BJ (cell line): ENCODE measurements at regions of chr11 and their contacts with region 1.

Region 1: DNA sequence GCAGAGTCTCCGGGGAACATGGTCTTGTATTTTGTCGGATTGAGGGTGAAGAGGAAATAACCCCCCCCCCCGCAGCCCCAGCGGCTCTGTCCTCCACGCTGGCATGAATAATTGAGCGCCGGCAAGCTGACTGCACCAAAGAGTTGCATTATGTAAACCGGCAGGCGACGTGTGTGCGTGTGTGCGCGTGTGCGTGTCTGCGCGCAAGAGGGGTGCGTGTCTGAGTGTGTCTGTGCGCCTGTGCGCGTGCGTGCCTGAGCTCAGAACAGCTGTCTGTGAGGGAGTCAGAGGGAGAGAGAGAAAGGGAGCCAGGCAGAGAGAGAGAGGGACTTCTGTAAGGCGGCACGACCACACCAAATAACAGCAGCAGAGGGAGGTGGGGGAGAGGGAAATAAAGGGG is 94.4 kb downstream of the SCN3B start:
- DNase-seq: peak; percentile 51
- H3K4me3 ChIP-seq: peak overlapping the region; percentile 20
- H3K27me3 ChIP-seq: no peaks in the 10 kb centered on the region
- CTCF ChIP-seq: no peak

Region 2: GRCh38 chr11:123306531-123306930 is 253.5 kb before region 1 on chr11:
- CTCF ChIA-PET with region 1: no interaction called
- POLR2A ChIA-PET with region 1: no interaction called
- DNase-seq: no peak
- H3K4me3 ChIP-seq: no peak overlapping the region
- H3K27me3 ChIP-seq: peaks cover 4% of the 10 kb centered on the region; the same call in 1 of the 2 replicates
- CTCF ChIP-seq: no peak

Region 3: GRCh38 chr11:123472236-123472935 is 87.6 kb before region 1 on chr11:
- CTCF ChIA-PET with region 1: no interaction called
- POLR2A ChIA-PET with region 1: no interaction called
- DNase-seq: no peak
- H3K4me3 ChIP-seq: no peak overlapping the region
- H3K27me3 ChIP-seq: no peaks in the 10 kb centered on the region
- CTCF ChIP-seq: no peak

Region 4: DNA sequence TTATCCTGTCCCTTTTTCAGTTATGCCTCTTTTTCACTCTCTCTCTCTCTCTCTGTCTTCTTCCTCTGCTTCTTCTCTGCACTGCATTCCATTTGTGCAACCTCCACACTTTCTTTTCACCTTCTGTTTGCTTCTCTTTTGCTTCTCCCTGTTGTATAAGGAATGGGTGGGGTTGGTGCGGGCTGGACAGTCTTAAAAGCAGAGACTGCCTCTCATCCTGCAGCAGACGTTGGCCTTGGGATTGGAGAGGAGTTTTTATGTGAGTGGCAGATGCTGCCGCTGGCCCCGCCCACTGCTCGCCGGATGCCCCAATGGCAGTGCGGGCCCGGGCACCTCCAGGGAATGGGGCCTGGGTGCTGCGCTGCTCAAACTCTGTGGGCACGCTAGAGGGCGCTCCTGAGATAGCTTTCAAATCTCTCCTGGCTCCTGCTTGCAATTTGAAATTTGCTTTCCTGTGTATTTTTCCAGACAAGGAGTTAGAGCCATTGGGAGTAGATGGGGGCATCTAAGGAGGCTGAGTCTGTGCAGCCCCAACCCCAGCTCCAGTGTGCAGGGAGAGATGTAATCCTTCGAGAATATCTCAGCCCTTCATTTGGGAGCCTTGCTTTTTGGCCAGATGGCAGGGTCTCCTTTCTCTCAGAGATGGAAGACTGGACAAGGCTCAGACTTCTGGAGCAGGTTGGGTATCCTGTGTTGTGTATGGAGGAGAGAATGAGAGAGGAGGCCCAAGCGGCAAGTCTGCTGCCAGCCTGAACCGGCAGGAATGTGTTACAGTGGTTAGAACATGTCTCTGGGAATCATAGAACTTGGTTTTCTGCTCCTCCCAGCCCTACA is 48.8 kb before region 1 on chr11:
- CTCF ChIA-PET with region 1: interaction called, 32 read pairs
- POLR2A ChIA-PET with region 1: no interaction called
- DNase-seq: peak; percentile 67
- H3K4me3 ChIP-seq: no peak overlapping the region
- H3K27me3 ChIP-seq: no peaks in the 10 kb centered on the region
- CTCF ChIP-seq: peak; percentile 95

Region 5: DNA sequence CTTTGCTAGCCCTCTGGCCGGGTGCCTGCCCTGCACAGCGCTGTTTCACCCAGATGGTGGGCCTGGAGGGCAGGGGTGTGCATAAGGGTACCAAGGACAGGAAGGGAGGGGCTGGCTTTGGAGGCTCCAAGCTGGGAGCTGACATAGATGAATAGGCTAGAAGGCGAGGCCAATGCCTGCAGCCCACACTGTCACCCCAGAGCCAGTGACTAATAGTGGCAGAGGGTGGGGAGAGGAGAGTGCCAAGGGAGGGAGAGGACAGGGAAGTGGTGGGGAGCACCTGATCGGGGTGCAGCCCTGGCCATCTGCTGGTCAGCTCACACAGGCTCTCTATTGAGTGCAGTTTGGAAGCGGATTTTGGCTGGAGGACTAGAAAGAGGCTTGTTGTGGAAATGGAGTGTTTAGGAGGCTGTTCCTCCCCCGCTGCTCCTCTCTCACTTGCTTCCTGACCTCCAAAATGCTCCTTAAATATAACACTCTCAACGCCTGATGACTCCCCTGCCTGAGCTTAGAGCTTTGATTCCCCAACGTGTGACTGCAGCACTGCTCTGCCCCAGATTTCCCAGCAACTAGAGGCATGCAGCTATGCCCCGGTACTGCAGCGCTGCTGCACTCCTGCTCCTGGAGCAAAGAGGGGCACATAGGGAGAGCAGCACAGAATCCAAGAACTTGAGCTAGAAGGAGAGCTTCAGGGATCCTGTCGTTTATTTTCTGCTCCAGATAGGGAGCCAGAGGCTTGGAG is 40.8 kb before region 1 on chr11:
- CTCF ChIA-PET with region 1: interaction called, 14 read pairs
- POLR2A ChIA-PET with region 1: interaction called, 21 read pairs
- DNase-seq: no peak
- H3K4me3 ChIP-seq: no peak overlapping the region
- H3K27me3 ChIP-seq: no peaks in the 10 kb centered on the region
- CTCF ChIP-seq: no peak

Region 6: GRCh38 chr11:123547180-123547579 is 12.8 kb before region 1 on chr11:
- CTCF ChIA-PET with region 1: interaction called, 36 read pairs
- POLR2A ChIA-PET with region 1: interaction called, 6 read pairs
- DNase-seq: no peak
- H3K4me3 ChIP-seq: no peak overlapping the region
- H3K27me3 ChIP-seq: no peaks in the 10 kb centered on the region
- CTCF ChIP-seq: no peak

Region 7: DNA sequence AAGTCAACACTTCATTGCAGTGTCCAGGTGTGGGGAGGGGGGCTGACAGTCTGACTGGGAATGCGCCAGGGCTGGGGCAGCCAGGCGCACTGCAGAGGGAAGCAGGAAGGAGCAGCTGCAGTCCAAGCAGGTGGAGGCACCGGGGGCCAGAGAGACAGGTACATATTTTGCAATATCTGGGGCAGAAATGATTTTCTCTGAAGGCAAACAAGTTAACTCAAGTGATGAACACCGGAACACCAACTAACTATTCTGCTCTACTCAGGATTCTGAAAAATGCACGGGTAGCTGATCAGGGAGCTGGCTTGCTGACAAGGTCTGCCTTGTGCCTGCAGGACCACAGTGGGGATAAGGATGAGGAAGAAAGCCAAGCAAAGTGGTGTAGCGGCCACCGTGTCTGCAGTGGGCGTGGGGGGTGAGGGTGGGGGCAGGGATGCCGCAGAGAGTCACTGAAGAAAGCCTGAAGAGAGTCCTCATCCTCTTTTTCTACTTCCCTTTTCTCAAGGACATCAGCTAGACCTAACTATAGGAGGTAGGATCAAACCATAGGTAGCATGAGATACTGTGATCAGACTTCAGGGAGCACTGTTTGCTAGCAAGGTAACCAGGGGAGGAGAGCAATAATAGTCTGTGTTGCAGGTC is 11.1 kb after region 1 on chr11:
- CTCF ChIA-PET with region 1: interaction called, 42 read pairs
- POLR2A ChIA-PET with region 1: no interaction called
- DNase-seq: no peak
- H3K4me3 ChIP-seq: no peak overlapping the region
- H3K27me3 ChIP-seq: no peaks in the 10 kb centered on the region
- CTCF ChIP-seq: no peak

Region 8: DNA sequence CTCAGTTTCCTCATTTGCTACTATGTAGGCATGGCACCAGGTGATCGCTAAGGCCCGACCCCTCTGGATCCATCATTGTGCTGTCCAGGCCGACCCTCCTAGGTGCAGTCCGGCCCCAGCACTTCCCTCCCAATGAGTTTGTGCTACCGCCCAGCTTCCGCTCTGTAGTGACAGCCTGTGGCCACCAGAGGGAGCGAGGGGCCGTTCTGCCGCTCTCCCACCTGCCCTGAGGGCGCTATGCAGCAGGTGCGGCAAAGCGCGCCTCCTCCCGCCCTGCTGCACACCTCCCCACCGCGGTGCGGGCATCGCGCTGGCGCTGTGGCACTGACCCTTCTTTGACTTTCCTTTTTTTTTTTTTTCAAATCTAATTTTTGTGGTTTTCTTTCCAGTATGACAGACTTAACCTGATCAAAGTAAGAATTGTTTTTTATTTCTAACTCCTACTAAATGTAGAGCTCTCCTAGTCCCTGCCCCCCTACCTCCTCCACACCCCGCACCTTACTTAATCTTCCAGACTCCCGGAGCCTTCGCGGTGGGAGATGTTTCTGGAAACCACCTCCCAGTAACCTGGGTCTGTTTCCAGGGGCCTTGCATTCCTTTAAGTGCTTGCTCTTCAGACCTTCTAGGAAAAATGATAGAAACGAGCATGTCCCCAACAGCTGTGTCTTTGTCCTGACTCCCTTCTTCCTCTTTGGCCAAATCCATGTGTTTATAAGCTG is 20.7 kb after region 1 on chr11:
- CTCF ChIA-PET with region 1: interaction called, 27 read pairs
- POLR2A ChIA-PET with region 1: no interaction called
- DNase-seq: no peak
- H3K4me3 ChIP-seq: no peak overlapping the region
- H3K27me3 ChIP-seq: no peaks in the 10 kb centered on the region
- CTCF ChIP-seq: peak; percentile 97

Region 9: DNA sequence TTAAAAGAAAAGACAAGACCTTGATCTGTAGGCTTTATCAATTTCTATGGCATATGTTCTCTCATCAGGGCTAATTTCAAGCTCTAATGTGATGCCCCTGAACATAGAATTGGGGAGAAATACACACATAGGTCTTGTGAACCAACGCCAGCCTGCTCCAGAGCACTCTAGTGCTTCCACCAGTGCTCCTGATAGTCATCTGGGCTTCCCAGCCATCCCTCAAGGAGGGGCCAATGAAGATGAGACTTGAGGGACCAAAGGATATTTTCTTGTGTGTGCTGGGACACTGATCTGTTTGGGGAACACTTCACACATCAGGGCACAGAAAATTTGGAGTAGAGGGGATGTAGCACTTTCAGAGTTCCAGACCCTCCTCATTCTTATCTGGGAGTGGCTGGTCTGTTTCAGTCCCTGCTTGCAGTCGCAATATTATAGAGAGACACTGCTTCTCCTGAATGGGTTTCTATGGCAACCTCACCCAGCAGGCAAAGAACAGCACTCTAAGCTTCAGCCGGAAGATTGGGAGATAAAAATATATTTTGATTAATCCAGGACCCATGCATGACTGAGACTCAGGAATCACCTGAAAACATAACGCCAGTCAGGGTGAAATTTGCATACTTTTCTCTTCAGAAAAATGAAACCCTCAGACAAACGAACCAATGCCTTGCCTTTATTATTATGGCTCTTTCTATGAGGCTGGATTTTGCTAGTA is 122.8 kb after region 1 on chr11:
- CTCF ChIA-PET with region 1: no interaction called
- POLR2A ChIA-PET with region 1: no interaction called
- DNase-seq: no peak
- H3K4me3 ChIP-seq: no peak overlapping the region
- H3K27me3 ChIP-seq: peaks cover 6% of the 10 kb centered on the region
- CTCF ChIP-seq: no peak

Region 10: GRCh38 chr11:124152770-124153407 is 592.9 kb after region 1 on chr11:
- CTCF ChIA-PET with region 1: no interaction called
- POLR2A ChIA-PET with region 1: no interaction called
- DNase-seq: no peak
- H3K4me3 ChIP-seq: no peak overlapping the region
- H3K27me3 ChIP-seq: no peaks in the 10 kb centered on the region
- CTCF ChIP-seq: no peak